ENCODE measurements at regions of chr3 and their contacts with region 1.

Region 1: GRCh38 chr3:193665370-193665989 is 72.5 kb downstream of the OPA1 start:
- DNase-seq: no peak
- ATAC-seq: no peak
- H3K4me3 Mint-ChIP-seq: no peak overlapping the region
- H3K27ac Mint-ChIP-seq: no peak overlapping the region
- H3K4me1 Mint-ChIP-seq: no peaks in the 10 kb centered on the region
- H3K27me3 Mint-ChIP-seq: no peaks in the 10 kb centered on the region

Region 2: DNA sequence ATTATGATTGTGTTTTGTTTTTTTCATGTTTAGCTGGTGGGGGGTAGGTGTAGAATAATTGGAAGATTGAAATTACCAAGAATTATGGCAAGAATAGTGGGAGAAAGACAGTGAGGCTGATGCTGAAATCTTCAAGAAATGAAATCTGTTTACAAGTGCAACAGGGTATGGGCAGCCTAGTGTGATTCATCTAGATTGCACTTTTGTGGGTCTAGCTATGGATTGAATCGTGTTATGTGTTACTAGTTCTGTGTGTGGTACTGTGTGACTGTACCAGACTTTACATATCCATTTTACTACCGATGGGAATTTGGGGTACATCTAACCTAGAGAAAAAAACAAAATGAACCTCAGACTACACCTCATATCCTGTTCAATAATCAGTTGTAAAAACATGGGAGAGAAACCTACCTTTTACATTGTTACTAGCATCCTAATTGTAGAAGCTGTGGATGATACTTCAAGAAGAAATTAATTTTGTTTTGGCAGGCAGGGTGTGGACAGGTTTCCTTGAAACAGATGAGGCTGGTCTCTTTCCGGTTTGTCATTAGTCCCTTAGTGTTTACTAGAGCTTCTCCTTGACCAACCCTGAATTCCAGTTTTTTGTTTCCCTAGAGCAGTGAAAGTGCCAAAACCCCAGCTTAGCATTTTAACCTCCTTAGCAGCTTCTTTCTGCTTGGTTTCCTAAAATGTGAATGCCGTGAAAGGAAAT is 24.6 kb before region 1 on chr3:
- CTCF ChIA-PET with region 1: interaction called, 10 read pairs
- POLR2A ChIA-PET with region 1: no interaction called
- intact Hi-C with region 1: no loop called
- DNase-seq: no peak
- ATAC-seq: peak; percentile 26
- H3K4me3 Mint-ChIP-seq: no peak overlapping the region
- H3K27ac Mint-ChIP-seq: no peak overlapping the region
- H3K4me1 Mint-ChIP-seq: no peaks in the 10 kb centered on the region
- H3K27me3 Mint-ChIP-seq: no peaks in the 10 kb centered on the region

Region 3: DNA sequence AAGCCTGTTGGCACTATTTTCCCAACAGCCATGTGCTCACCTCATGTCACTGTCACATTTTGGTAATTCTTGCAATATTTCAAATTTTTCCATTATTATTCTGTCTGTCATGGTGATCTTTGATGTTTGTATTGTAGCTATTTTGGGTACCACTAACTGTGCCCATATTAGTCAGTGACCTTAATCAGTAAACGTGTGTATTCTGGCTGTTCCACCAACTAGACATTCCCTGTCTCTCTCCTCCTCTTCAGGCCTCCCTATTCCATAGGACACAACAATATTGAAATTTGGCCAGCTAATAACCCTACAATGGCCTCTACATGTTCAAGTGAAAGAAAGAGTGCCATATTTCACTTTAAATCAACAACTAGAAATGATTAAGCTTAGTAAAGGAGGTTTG is 16.2 kb after region 1 on chr3:
- CTCF ChIA-PET with region 1: interaction called, 12 read pairs
- POLR2A ChIA-PET with region 1: no interaction called
- intact Hi-C with region 1: no loop called
- DNase-seq: no peak
- ATAC-seq: no peak
- H3K4me3 Mint-ChIP-seq: no peak overlapping the region
- H3K27ac Mint-ChIP-seq: no peak overlapping the region
- H3K4me1 Mint-ChIP-seq: peaks cover 9% of the 10 kb centered on the region
- H3K27me3 Mint-ChIP-seq: no peaks in the 10 kb centered on the region

Region 4: DNA sequence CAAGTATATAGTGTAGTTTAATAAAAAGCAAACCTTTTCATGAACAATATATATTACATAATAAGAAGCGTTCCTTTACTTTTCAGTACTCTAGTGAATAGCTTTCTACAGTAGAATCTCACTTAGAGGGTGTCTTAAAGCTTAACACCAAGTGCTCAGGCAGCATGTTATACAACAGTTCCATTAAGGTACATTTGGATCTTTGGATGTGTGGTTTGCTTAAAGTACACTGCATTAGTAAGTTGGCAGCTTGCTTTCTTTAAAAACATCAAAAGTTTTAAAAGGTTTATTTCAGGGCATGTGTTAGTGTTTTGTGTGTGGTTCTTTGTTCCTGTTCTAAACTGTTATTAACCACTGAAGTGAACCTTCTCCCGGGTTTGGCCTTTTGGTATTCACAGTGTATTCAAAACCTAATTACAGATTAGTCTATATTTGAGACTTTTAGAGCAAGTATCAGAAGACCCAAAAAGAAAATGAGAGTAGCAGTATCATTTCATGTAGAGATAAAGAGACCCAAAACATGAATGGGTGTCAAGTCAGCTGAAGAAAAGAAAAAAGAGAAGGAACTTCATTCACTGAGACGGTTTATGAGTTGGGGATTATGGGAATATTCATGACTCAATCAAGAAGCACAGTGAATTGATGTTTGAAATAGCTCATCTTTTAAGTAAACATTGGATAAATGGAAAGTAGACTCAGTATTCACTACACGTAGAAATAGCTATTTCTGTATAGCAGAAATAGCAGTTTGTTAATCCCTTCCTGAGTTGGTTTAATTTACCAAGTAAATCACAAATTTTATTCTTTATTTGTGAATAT is 21.4 kb after region 1 on chr3:
- CTCF ChIA-PET with region 1: interaction called, 12 read pairs
- POLR2A ChIA-PET with region 1: no interaction called
- intact Hi-C with region 1: no loop called
- DNase-seq: no peak
- ATAC-seq: no peak
- H3K4me3 Mint-ChIP-seq: no peak overlapping the region
- H3K27ac Mint-ChIP-seq: no peak overlapping the region
- H3K4me1 Mint-ChIP-seq: no peaks in the 10 kb centered on the region
- H3K27me3 Mint-ChIP-seq: no peaks in the 10 kb centered on the region

Region 5: GRCh38 chr3:194070634-194071409 is 405.3 kb after region 1 on chr3:
- CTCF ChIA-PET with region 1: no interaction called
- POLR2A ChIA-PET with region 1: no interaction called
- intact Hi-C with region 1: no loop called
- DNase-seq: peak; percentile 87
- ATAC-seq: peak; percentile 82
- H3K4me3 Mint-ChIP-seq: peak overlapping the region; percentile 55
- H3K27ac Mint-ChIP-seq: peak overlapping the region; percentile 10
- H3K4me1 Mint-ChIP-seq: peaks cover 24% of the 10 kb centered on the region
- H3K27me3 Mint-ChIP-seq: peaks cover 34% of the 10 kb centered on the region

Region 6: GRCh38 chr3:194465920-194466570 is 800.6 kb after region 1 on chr3:
- CTCF ChIA-PET with region 1: no interaction called
- POLR2A ChIA-PET with region 1: no interaction called
- intact Hi-C with region 1: no loop called
- DNase-seq: no peak
- ATAC-seq: peak; percentile 74
- H3K4me3 Mint-ChIP-seq: no peak overlapping the region
- H3K27ac Mint-ChIP-seq: peak overlapping the region; percentile 72
- H3K4me1 Mint-ChIP-seq: peaks cover 30% of the 10 kb centered on the region
- H3K27me3 Mint-ChIP-seq: no peaks in the 10 kb centered on the region